Activated B cell treated with CpG ODN at 0.5 μM for 24 hours (primary cell): ENCODE measurements at regions of chr11 and their contacts with region 1.

Region 1: DNA sequence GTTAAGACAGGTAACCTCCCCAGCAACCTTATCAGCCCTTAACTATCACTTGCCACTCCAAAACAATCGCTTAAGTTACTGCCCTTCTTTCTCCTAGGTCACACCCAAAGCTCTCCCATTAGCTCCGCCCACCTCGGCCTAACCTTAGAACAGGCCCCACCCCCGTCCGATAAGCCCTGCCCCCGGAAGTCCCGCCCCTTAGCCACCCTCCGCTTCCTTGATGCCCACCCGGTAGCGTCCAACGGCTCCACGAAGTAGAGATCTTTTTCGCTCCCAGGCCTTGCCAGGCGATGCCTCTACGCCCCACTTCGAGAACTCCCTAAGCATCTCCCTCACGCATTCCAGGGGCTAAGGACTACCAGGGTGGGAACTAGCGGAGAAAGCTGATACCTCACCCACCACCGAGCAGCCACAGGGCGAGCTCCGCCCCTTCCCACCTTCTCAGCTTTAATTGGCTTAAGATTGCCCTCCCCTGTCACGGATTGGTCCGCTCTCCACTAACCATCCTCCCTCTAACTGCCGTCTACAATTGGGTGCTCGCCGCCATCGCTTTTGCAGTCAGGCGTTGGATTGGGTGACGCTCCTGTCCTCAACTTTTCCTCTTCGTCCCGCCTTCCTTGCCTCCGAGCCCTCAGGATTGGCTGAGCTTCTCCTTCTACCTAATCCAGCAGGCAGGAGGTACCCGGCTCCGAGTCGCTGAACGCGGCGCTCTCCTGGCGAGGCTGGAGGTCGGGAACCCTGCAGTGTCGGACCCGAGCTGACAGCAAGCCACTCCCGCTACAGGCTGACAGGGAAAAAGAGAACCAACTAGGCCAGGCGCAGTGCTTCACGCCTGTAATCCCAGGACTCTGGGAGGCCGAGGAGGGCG is at the start of gene ZBTB3:
- DNase-seq: peak; percentile 91
- ATAC-seq: peak; percentile 93
- H3K4me3 Mint-ChIP-seq: peak within 1 kb of the TSS; percentile 97
- H3K27ac Mint-ChIP-seq: peak within 1 kb of the TSS; percentile 99
- H3K4me1 Mint-ChIP-seq: peaks cover 22% of the 10 kb centered on the region
- H3K27me3 Mint-ChIP-seq: no peaks in the 10 kb centered on the region
- CTCF ChIP-seq: no peak
- total RNA-seq, gene ZBTB3: 17.6 and 19.9 TPM in 2 replicates

Region 2: DNA sequence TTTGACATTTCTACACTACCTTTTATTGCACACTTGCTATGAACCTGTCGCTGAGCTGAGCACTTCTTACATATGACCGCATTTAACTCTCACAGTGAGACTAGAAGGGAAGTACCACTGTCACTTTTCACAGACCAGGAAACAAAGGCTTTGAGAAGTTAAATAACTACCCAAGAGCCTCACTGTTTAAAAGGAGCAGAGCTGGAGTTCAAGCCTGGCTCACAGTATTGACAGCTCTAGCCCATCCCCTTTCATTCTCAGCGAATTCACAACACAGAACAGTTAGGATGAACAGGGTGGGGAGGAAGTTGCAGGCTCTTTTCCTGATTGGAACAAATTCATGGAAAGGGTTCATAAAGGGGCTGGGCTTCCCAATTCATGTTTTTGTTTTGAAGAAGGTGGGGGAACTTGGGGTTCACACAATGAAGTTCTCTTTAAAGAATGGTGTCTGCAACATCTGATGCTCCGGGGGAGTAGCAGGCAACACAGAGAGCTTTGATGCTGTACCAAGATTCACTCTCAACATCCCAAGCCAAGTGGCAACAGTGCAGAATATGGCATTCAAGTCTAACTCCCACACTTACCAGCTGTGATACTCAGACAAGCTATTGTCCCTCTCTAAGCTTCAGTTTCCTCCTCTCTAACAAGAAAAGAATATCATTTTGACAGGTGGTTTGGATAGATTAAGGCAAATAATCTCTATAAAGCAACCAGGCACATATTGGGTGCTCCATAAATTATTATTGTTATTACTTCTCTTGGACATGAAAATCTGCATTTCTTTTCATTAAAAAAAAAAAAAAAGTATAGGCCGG is 317.9 kb before region 1 on chr11:
- CTCF ChIA-PET with region 1: no interaction called
- POLR2A ChIA-PET with region 1: no interaction called
- intact Hi-C with region 1: no loop called
- DNase-seq: no peak
- ATAC-seq: peak; percentile 66
- H3K4me3 Mint-ChIP-seq: no peak overlapping the region
- H3K27ac Mint-ChIP-seq: peak overlapping the region; percentile 5
- H3K4me1 Mint-ChIP-seq: peaks cover 36% of the 10 kb centered on the region
- H3K27me3 Mint-ChIP-seq: no peaks in the 10 kb centered on the region
- CTCF ChIP-seq: no peak

Region 3: GRCh38 chr11:62573592-62574362 is 180.2 kb before region 1 on chr11 and contains the start of gene EEF1G:
- CTCF ChIA-PET with region 1: no interaction called
- POLR2A ChIA-PET with region 1: interaction called, 6 read pairs
- intact Hi-C with region 1: loop called (anchors 5 kb)
- DNase-seq: peak; percentile 92
- ATAC-seq: peak; percentile 94
- H3K4me3 Mint-ChIP-seq: peak within 1 kb of the TSS; percentile 97
- H3K27ac Mint-ChIP-seq: peak within 1 kb of the TSS; percentile 94
- H3K4me1 Mint-ChIP-seq: peaks cover 51% of the 10 kb centered on the region
- H3K27me3 Mint-ChIP-seq: no peaks in the 10 kb centered on the region
- CTCF ChIP-seq: no peak
- total RNA-seq, gene EEF1G: 2,373 and 2,524 TPM in 2 replicates

Region 4: DNA sequence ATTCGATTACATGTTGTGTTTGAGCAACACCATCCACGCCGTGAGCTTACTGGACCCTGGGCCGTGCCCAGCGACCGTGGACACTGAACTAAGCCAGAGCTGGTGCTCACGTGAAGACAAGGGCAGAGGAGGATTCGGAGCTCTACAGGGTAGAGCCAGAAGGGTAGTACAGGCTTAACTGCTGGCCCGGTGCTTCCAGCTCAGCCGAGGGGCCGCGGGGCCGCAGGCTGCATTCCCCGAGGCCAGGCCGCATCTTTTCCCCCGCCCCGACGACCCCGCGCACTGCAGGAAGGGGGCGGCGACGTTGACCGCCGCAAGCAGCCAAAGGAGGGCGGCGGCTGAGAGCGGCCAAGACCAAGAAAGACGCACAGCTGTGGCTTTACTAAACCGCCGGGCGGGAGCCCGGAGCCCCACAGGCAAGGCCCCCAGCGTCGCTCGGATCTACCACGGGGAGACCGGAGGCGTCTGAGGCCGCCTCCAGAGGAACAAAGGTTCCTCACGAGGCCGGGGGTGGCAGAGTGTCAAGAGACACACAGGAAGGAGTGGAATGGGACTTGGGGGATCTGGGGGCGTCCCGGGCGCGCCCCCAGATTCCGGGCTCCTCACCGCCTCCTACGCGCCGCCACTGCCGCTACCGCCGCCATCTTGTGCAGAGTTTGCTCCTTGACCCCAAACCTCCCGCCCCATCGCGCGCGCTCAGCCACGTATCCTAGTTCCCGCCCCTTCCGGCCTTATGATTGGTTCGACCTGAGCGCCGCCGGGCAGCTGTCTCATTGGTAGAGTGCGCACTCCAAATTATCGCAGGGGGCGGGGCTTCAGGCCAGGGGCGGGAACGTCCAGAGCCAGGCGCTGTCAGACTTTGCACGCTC is 107.8 kb before region 1 on chr11 and contains the start of gene GANAB:
- CTCF ChIA-PET with region 1: no interaction called
- POLR2A ChIA-PET with region 1: interaction called, 12 read pairs
- intact Hi-C with region 1: no loop called
- DNase-seq: peak; percentile 89
- ATAC-seq: peak; percentile 99
- H3K4me3 Mint-ChIP-seq: peak within 1 kb of the TSS; percentile 93
- H3K27ac Mint-ChIP-seq: peak within 1 kb of the TSS; percentile 86
- H3K4me1 Mint-ChIP-seq: peaks cover 34% of the 10 kb centered on the region
- H3K27me3 Mint-ChIP-seq: no peaks in the 10 kb centered on the region
- CTCF ChIP-seq: no peak
- total RNA-seq, gene GANAB: 187 and 189 TPM in 2 replicates

Region 5: DNA sequence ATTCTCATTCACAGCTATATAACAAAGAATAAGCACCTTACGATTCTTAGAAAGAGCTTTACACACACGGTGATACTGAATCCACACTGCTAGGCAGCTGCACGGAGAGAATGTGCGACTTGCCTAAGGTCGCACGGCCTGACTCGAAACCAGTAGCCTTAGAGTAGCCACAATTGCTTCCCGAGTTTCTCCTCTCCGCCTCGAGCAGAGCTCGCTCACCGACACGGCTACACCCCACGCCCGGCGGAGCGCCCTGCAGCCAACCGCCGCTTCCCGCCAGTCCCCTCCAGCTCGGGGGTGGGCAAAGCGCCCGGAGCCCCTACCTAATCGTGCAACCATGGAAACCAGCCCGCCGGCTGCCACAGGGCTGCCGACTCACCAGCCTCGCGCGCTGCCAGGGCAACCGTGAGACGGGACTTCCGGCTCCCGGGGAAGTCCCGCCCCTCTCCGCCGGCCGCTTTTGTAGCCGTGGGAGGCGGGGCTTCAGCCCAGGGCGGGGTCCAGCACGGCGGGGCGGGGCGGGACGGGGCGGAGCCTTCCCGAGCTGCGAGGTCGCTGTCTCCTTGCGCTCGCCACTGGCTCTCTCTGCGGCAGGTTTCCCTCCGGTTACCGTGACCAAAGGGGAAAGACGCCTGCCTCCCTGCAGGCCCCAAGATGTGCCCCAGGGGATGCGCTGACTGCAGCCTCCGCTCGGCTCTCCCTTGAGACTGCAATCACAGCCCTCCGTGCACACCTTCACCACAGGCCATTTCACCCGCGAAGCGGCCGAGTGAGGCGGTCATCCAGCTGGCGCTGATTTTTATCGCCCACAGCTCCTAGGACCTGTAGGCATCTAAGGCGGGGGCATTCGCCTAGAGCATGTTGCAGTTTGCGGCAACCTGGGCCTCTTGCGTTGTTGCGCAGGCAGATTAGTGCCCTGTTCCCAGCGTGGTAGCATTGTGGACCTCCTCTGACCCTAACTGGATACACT is 47.8 kb before region 1 on chr11:
- CTCF ChIA-PET with region 1: no interaction called
- POLR2A ChIA-PET with region 1: interaction called, 67 read pairs
- intact Hi-C with region 1: loop called (anchors 1 kb)
- DNase-seq: peak; percentile 90
- ATAC-seq: peak; percentile 73
- H3K4me3 Mint-ChIP-seq: peak overlapping the region; percentile 92
- H3K27ac Mint-ChIP-seq: peak overlapping the region; percentile 99
- H3K4me1 Mint-ChIP-seq: peaks cover 49% of the 10 kb centered on the region
- H3K27me3 Mint-ChIP-seq: no peaks in the 10 kb centered on the region
- CTCF ChIP-seq: no peak

Region 6: GRCh38 chr11:62787005-62787759 is 33.2 kb after region 1 on chr11 and contains the start of gene TMEM179B:
- CTCF ChIA-PET with region 1: interaction called, 13 read pairs
- POLR2A ChIA-PET with region 1: interaction called, 74 read pairs
- intact Hi-C with region 1: loop called (anchors 1 kb)
- DNase-seq: peak; percentile 87
- ATAC-seq: peak; percentile 71
- H3K4me3 Mint-ChIP-seq: peak within 1 kb of the TSS; percentile 92
- H3K27ac Mint-ChIP-seq: peak within 1 kb of the TSS; percentile 89
- H3K4me1 Mint-ChIP-seq: peaks cover 42% of the 10 kb centered on the region
- H3K27me3 Mint-ChIP-seq: no peaks in the 10 kb centered on the region
- CTCF ChIP-seq: peak; percentile 66
- total RNA-seq, gene TMEM179B: 34.9 and 47.7 TPM in 2 replicates

Region 7: GRCh38 chr11:62855571-62856332 is 101.8 kb after region 1 on chr11:
- CTCF ChIA-PET with region 1: no interaction called
- POLR2A ChIA-PET with region 1: interaction called, 26 read pairs
- intact Hi-C with region 1: no loop called
- DNase-seq: peak; percentile 99
- ATAC-seq: peak; percentile 89
- H3K4me3 Mint-ChIP-seq: peak overlapping the region; percentile 99
- H3K27ac Mint-ChIP-seq: peak overlapping the region; percentile 96
- H3K4me1 Mint-ChIP-seq: peaks cover 61% of the 10 kb centered on the region
- H3K27me3 Mint-ChIP-seq: no peaks in the 10 kb centered on the region
- CTCF ChIP-seq: no peak

Region 8: GRCh38 chr11:63652671-63653070 is 898.7 kb after region 1 on chr11:
- CTCF ChIA-PET with region 1: no interaction called
- POLR2A ChIA-PET with region 1: no interaction called
- intact Hi-C with region 1: no loop called
- DNase-seq: no peak
- ATAC-seq: no peak
- H3K4me3 Mint-ChIP-seq: no peak overlapping the region
- H3K27ac Mint-ChIP-seq: no peak overlapping the region
- H3K4me1 Mint-ChIP-seq: no peaks in the 10 kb centered on the region
- H3K27me3 Mint-ChIP-seq: no peaks in the 10 kb centered on the region
- CTCF ChIP-seq: no peak

Region 9: DNA sequence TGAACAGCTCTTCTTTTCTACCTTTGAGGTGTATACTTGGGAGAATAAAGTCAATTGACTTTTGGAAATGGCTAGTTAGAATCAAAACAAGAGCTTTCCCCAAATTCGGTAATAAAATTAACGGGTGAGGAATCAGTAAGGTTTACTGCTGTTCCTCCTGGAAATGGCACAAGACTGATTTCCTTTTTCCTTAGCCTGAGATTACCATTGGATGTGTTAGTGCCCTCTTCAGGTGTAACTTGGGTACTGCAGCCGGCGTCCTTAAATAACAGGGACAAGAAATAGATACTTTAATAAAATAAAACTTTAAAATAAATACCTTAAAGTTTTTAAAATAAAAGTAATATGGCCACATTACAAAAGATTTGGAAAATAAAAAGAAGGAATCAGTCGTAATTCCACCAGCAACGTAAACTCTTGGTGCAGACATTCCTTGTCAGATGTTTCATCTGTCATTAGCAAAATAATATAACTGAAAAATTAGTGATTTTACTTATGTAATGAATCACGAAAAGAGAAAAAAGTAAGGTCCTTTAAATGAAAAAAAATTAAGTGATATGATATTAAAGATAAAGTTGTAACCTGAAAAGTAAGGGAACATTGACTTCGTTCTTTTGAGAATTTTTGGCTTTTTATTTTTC is 984.9 kb after region 1 on chr11:
- CTCF ChIA-PET with region 1: no interaction called
- POLR2A ChIA-PET with region 1: no interaction called
- intact Hi-C with region 1: no loop called
- DNase-seq: peak; percentile 37
- ATAC-seq: no peak
- H3K4me3 Mint-ChIP-seq: no peak overlapping the region
- H3K27ac Mint-ChIP-seq: no peak overlapping the region
- H3K4me1 Mint-ChIP-seq: peaks cover 2% of the 10 kb centered on the region
- H3K27me3 Mint-ChIP-seq: no peaks in the 10 kb centered on the region
- CTCF ChIP-seq: peak; percentile 100